AG04450 (cell line): ENCODE measurements at regions of chr9 and their contacts with region 1.

Region 1: GRCh38 chr9:130866474-130866965 is 30.1 kb downstream of the QRFP start:
- DNase-seq: peak; percentile 68
- H3K4me3 ChIP-seq: peak overlapping the region; percentile 34
- H3K27ac ChIP-seq: no peak overlapping the region
- H3K27me3 ChIP-seq: no peaks in the 10 kb centered on the region
- CTCF ChIP-seq: peak; percentile 97

Region 2: DNA sequence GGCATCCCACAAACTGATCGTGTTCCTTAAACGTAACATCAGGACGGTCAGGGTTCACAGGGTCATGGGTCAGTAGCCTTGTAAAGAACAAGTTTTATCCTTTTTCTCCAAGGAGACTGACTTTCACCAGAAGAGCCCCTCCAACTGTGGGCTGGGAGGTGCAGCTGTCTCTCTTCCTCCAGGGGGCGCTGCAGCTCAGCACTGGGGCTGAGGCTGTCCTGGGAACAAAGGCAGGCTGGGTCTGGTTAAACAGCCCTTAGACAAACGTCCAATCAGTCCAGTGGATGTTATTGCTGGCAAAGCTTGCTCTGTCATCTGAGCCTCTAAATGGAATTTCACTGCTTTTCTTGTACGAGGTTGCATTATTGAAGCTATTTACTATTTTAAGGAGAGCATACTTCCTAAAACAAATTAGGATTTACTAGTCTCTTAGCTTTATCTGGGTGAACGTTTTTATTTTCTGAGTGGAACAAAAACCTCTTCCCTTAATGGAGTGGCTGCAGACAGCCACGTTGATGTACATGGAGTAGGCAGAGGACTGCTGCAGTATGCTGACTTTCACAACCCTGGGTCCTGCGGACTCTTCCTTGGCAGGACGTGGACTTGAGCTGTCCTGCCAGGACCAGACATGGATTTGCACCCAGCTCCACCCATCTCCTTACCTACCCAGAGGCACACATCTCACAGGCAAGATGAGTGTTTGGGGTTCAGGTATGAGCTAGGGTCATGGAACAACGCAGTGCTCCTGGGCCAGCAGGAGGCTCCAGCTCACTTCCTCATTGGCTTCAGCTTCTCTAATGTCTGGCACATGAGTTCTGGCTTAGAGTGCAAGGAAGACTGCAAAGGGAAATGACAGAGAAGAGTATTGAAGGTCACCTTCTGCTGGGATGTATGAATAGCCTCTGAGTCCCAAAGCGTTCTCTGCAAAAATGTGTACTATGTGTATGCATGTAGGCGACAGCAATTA is 165.2 kb before region 1 on chr9:
- CTCF ChIA-PET with region 1: interaction called, 390 read pairs
- POLR2A ChIA-PET with region 1: no interaction called
- DNase-seq: peak; percentile 81
- H3K4me3 ChIP-seq: no peak overlapping the region
- H3K27ac ChIP-seq: no peak overlapping the region
- H3K27me3 ChIP-seq: no peaks in the 10 kb centered on the region
- CTCF ChIP-seq: peak; percentile 99

Region 3: GRCh38 chr9:130765137-130766020 is 101.1 kb before region 1 on chr9:
- CTCF ChIA-PET with region 1: interaction called, 121 read pairs
- POLR2A ChIA-PET with region 1: interaction called, 3 read pairs
- DNase-seq: no peak
- H3K4me3 ChIP-seq: no peak overlapping the region
- H3K27ac ChIP-seq: no peak overlapping the region
- H3K27me3 ChIP-seq: no peaks in the 10 kb centered on the region
- CTCF ChIP-seq: no peak

Region 4: DNA sequence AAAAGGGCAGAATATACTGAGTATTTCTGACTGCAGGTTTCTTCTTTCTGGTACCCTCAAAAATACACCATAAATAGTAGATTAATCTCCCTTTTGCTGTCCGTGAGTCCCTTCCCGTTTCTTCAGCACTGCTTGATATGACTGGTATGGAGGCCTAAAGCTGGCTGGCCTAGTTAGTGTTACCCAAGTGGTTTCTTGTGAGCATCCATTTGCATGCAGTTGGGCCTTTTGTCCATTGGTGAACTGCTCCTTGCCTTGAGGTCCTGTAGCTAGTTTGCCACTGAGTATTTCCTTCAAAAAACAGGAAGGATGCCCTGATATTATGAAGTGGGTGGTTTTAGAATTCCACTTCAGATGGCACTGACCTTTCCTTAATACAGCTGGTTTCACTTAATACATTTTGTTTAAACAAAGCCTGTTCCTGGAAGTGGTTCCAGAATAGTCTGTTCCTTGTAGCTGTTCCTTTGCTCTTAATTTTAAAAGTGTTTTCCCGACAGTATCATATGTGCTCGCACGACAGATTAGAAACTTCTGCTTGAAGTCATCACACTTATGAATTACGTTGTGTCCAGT is 71.5 kb before region 1 on chr9:
- CTCF ChIA-PET with region 1: interaction called, 11 read pairs
- POLR2A ChIA-PET with region 1: no interaction called
- DNase-seq: no peak
- H3K4me3 ChIP-seq: no peak overlapping the region
- H3K27ac ChIP-seq: peak overlapping the region; percentile 55
- H3K27me3 ChIP-seq: no peaks in the 10 kb centered on the region
- CTCF ChIP-seq: no peak

Region 5: GRCh38 chr9:130884980-130885696 is 18.6 kb after region 1 on chr9:
- CTCF ChIA-PET with region 1: interaction called, 54 read pairs
- POLR2A ChIA-PET with region 1: no interaction called
- DNase-seq: no peak
- H3K4me3 ChIP-seq: no peak overlapping the region
- H3K27ac ChIP-seq: no peak overlapping the region
- H3K27me3 ChIP-seq: no peaks in the 10 kb centered on the region
- CTCF ChIP-seq: no peak

Region 6: GRCh38 chr9:130997925-130998596 is 131.5 kb after region 1 on chr9:
- CTCF ChIA-PET with region 1: interaction called, 88 read pairs
- POLR2A ChIA-PET with region 1: no interaction called
- DNase-seq: peak; percentile 18
- H3K4me3 ChIP-seq: no peak overlapping the region
- H3K27ac ChIP-seq: no peak overlapping the region
- H3K27me3 ChIP-seq: peaks cover 24% of the 10 kb centered on the region
- CTCF ChIP-seq: peak; percentile 78